BJ (cell line): ENCODE measurements at regions of chr2 and their contacts with region 1.

Region 1: GRCh38 chr2:40534528-40534927 is 82.6 kb upstream of the SLC8A1 start:
- DNase-seq: no peak
- H3K4me3 ChIP-seq: no peak overlapping the region
- H3K27me3 ChIP-seq: no peaks in the 10 kb centered on the region
- CTCF ChIP-seq: no peak

Region 2: DNA sequence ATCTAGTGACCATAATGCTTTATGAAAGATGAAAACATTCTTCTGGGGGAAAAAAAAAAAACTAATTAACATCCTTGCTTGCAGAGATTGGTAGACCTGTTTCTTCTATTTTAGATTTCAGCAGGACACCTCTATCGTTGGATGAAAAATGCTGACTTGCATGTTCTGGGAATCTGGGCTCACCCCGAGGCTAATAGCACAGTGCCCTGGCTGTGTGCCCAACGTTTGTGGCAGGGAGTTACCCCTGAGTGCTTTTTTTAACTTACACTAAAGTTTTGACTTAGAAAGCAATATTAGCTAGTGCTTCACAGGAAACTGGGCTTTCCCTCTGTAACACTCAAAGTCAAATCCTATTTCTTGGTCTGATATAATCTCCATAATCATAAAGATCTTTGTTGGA is 315.8 kb before region 1 on chr2:
- CTCF ChIA-PET with region 1: no interaction called
- POLR2A ChIA-PET with region 1: no interaction called
- DNase-seq: no peak
- H3K4me3 ChIP-seq: no peak overlapping the region
- H3K27me3 ChIP-seq: no peaks in the 10 kb centered on the region
- CTCF ChIP-seq: no peak

Region 3: GRCh38 chr2:40401896-40402295 is 132.6 kb before region 1 on chr2:
- CTCF ChIA-PET with region 1: no interaction called
- POLR2A ChIA-PET with region 1: interaction called, 17 read pairs
- DNase-seq: peak; percentile 38
- H3K4me3 ChIP-seq: no peak overlapping the region
- H3K27me3 ChIP-seq: no peaks in the 10 kb centered on the region
- CTCF ChIP-seq: no peak

Region 4: GRCh38 chr2:40458271-40458794 is 76.2 kb before region 1 on chr2:
- CTCF ChIA-PET with region 1: no interaction called
- POLR2A ChIA-PET with region 1: no interaction called
- DNase-seq: no peak
- H3K4me3 ChIP-seq: no peak overlapping the region
- H3K27me3 ChIP-seq: no peaks in the 10 kb centered on the region
- CTCF ChIP-seq: no peak